Vagina (tissue), 2 donors: ENCODE measurements at regions of chr16 and their contacts with region 1.

Region 1: DNA sequence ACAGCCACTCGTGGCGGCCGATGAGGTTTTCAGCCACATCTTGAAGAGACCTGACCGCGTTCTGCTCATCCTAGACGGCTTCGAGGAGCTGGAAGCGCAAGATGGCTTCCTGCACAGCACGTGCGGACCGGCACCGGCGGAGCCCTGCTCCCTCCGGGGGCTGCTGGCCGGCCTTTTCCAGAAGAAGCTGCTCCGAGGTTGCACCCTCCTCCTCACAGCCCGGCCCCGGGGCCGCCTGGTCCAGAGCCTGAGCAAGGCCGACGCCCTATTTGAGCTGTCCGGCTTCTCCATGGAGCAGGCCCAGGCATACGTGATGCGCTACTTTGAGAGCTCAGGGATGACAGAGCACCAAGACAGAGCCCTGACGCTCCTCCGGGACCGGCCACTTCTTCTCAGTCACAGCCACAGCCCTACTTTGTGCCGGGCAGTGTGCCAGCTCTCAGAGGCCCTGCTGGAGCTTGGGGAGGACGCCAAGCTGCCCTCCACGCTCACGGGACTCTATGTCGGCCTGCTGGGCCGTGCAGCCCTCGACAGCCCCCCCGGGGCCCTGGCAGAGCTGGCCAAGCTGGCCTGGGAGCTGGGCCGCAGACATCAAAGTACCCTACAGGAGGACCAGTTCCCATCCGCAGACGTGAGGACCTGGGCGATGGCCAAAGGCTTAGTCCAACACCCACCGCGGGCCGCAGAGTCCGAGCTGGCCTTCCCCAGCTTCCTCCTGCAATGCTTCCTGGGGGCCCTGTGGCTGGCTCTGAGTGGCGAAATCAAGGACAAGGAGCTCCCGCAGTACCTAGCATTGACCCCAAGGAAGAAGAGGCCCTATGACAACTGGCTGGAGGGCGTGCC is 30.1 kb downstream of the CIITA start:
- DNase-seq: no peak
- H3K4me3 ChIP-seq: no peak overlapping the region
- H3K27ac ChIP-seq: no peak overlapping the region
- H3K4me1 ChIP-seq: no peaks in the 10 kb centered on the region
- H3K27me3 ChIP-seq: no peaks in the 10 kb centered on the region
- CTCF ChIP-seq: no peak
- POLR2A ChIP-seq: no peak

Region 2: GRCh38 chr16:10752843-10753523 is 154.2 kb before region 1 on chr16:
- intact Hi-C with region 1: loop called (anchors 10 kb)
- DNase-seq: no peak
- H3K4me3 ChIP-seq: no peak overlapping the region
- H3K27ac ChIP-seq: no peak overlapping the region
- H3K4me1 ChIP-seq: no peaks in the 10 kb centered on the region
- H3K27me3 ChIP-seq: no peaks in the 10 kb centered on the region
- CTCF ChIP-seq: no peak
- POLR2A ChIP-seq: no peak